Common myeloid progenitor, CD34-positive (primary cell): ENCODE measurements at regions of chr17 and their contacts with region 1.

Region 1: DNA sequence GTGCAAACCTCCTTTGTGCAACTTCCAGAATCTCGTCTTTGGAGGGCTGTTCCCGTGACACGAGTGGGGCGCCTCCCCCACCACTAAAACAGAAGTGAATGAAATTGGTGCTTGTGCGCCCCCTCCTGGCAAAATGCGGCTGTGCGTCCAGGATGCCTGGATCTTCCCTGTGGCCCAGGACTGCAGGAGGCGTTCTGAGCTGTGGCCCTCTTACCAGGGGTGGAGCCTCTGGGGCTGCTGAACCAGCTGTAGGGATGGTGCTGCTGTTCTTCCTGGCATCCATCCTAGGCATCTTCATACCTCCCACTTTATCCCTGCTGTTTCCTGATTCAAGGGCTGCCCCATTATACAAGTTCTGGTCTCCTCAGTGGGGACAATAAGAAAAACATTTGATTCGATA is 18.5 kb upstream of the NAGLU start:
- DNase-seq: peak; percentile 79 to 84 (median 79)
- H3K4me3 ChIP-seq: peak overlapping the region in 1 of 7 experiments; percentile 25
- H3K27ac ChIP-seq: peak overlapping the region; percentile 16 to 71
- H3K4me1 ChIP-seq: peaks cover 26 to 69% (median 62%) of the 10 kb centered on the region in 4 experiments
- H3K27me3 ChIP-seq: no peaks in the 10 kb centered on the region

Region 2: DNA sequence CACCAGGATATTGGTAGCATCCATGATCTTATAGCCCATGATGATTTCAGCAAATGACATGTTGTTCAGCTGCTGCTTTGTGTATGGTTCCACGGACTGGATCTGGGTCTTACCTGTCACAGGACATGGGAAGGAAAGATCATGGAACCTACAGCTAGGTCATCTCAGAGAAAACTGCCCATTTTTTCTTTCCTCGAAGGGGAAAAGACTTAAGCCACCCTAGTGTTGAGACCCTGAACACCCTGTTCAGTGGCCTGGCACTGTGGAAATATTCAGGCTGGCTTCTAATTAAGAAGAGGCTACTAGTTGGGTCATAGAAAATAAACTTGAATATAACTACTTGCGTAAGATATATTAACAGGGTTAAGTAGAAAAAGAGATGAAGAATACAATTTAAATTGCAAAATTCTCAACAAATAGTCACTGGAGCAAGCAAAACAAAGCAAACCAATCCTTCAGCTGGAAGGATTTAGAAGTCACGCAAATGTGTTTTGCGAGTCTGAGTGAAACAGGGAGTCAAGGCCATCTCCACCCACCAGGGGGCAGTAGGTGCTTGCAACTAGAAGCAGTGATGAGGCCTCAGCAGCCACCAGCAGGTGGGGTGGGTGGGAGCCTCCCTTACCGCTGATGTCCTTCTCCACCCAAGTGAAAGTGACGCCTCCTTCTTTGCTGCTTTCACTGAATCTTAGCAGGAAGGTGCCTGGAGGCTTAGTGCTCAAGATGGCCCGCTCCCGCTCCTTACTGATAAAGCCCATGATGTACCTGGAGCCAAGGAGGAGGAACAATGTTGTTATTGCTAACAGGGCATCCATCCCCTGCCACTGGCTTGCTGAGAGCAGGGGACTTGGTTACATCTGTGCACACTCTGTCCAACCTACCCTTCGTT is 194.9 kb before region 1 on chr17:
- CTCF ChIA-PET with region 1: interaction called, 11 read pairs
- POLR2A ChIA-PET with region 1: interaction called, 6 read pairs
- DNase-seq: peak; percentile 96 to 98 (median 97)
- H3K4me3 ChIP-seq: peak overlapping the region in 2 of 7 experiments; percentile 19 to 38
- H3K27ac ChIP-seq: peak overlapping the region; percentile 98 to 99
- H3K4me1 ChIP-seq: peaks cover 24 to 56% (median 55%) of the 10 kb centered on the region in 4 experiments
- H3K27me3 ChIP-seq: no peaks in the 10 kb centered on the region

Region 3: GRCh38 chr17:42414704-42415409 is 102.7 kb before region 1 on chr17:
- CTCF ChIA-PET with region 1: interaction called, 21 read pairs
- POLR2A ChIA-PET with region 1: interaction called, 3 read pairs
- DNase-seq: peak in 2 of 3 donors; percentile 80 to 87
- H3K4me3 ChIP-seq: peak overlapping the region in 6 of 7 experiments; percentile 26 to 76 (median 54)
- H3K27ac ChIP-seq: peak overlapping the region; percentile 27 to 61
- H3K4me1 ChIP-seq: peaks cover 11 to 66% (median 52%) of the 10 kb centered on the region in 4 experiments
- H3K27me3 ChIP-seq: no peaks in the 10 kb centered on the region

Region 4: GRCh38 chr17:42428141-42428944 is 89.2 kb before region 1 on chr17:
- CTCF ChIA-PET with region 1: interaction called, 23 read pairs
- POLR2A ChIA-PET with region 1: interaction called, 4 read pairs
- DNase-seq: peak; percentile 66 to 85 (median 80)
- H3K4me3 ChIP-seq: no peak overlapping the region
- H3K27ac ChIP-seq: no peak overlapping the region
- H3K4me1 ChIP-seq: peaks cover 0 to 7% (median 3%) of the 10 kb centered on the region in 4 experiments
- H3K27me3 ChIP-seq: no peaks in the 10 kb centered on the region

Region 5: GRCh38 chr17:42484304-42484703 is 33.2 kb before region 1 on chr17:
- CTCF ChIA-PET with region 1: interaction called, 10 read pairs
- POLR2A ChIA-PET with region 1: no interaction called
- DNase-seq: peak in 2 of 3 donors; percentile 26 to 44
- H3K4me3 ChIP-seq: no peak overlapping the region
- H3K27ac ChIP-seq: no peak overlapping the region
- H3K4me1 ChIP-seq: no peaks in the 10 kb centered on the region
- H3K27me3 ChIP-seq: no peaks in the 10 kb centered on the region